AG04449 (cell line): ENCODE measurements at regions of chr1 and their contacts with region 1.

Region 1: DNA sequence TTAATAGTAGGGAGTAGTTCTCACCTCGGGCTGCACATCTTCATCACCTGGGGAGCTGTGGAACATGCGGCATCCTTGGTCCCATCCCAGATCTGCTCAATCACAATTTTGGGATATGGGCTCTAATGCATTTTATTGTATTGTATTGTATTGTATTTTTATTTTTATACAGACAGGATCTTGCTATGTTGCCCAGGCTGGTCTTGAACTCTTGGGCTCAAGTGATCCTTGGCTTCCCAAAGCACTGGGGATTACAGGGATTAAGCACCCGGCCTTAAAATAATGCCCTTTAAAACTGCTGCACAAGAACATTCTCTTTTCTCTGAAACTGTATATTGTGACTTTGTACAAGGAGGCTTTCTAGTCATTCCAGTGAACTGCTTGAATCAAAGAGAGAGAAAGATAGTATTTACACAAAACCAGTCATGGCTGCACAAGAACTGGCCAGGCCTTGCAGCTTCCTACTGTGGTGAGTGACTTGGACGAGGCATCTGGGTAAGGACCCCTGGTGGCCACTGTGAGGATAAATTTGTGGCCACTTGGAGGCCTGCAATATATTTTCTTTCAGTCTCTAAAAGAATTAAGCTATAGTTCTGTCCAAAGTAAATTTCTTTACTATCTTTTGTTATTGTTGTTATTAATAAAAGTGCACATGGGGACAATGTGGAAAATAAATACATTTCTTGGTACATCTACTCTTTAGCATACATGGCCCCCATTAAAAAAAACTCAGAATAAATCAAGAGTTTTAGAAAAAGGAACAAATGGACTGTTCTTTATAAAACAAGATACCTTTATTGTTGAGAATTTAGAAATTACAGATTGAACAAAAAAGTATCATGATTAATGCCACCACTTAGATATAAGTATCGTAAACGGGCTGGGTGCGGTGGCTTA is 48.0 kb downstream of the TBCE start:
- DNase-seq: peak; percentile 33
- H3K4me3 ChIP-seq: no peak overlapping the region
- CTCF ChIP-seq: peak; percentile 78

Region 2: DNA sequence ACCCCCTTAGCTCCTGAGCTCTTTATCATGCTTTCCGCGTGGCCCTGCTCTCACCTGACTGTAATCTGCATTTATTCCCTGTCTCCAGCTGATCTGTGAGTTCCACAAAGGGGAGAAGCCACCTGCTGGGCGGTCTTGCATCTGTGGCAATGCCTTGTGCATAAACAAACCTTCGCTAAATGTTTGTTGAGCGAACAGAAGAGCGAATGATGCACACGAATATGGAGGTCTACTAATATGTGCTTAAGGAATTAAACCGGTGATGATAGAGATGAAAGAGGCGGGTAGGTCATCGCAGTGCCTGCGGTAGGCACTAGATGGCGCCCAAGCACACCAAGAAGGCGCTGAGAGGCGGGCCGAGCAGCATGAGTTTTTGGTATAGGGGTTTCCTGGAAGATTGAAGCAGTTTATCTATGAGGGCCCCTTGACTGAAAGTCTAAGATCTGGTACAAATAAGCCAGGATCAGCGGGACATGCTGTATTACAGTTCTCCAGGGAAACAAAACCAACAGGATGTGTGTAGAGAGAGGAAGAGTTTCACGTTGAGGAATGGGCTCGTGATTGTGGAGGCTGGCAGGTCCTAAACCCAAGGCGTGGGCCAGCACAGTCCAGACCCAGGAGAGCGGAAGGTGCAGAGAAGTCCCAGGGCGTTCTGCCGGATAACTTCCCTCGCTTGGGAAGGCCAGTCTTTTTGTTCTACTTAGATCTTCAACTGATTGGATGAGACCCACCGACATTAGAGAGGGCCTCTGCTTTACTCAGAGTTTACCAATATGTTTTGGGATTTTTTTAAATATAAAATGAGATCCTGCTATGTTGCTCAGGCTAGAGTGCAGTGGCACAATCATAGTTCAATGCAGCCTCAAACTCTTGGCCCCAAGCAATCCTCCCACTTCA is 321.3 kb before region 1 on chr1:
- CTCF ChIA-PET with region 1: interaction called, 11 read pairs
- POLR2A ChIA-PET with region 1: no interaction called
- DNase-seq: no peak
- H3K4me3 ChIP-seq: no peak overlapping the region
- CTCF ChIP-seq: peak; percentile 87

Region 3: GRCh38 chr1:235239851-235240250 is 175.4 kb before region 1 on chr1:
- CTCF ChIA-PET with region 1: interaction called, 39 read pairs
- POLR2A ChIA-PET with region 1: no interaction called
- DNase-seq: no peak
- H3K4me3 ChIP-seq: no peak overlapping the region
- CTCF ChIP-seq: no peak

Region 4: DNA sequence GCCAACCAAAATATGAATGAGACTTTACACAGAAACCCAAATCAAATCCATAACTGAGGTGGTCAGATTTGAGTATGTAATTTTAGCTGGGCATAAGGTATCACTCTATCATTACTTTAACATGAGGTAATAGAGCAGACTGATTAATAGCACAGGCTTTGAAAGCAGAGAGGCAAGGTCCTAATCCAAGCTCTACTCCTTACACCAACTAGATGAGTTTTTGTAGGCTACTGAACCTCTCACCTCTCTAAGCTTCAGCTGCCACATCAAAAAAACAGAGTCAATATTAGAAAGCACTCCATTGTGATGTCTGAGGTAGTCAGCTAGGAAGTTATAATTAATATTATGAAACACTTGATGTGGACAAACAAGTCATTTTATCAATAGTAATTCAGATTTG is 150.9 kb before region 1 on chr1:
- CTCF ChIA-PET with region 1: interaction called, 31 read pairs
- POLR2A ChIA-PET with region 1: no interaction called
- DNase-seq: no peak
- H3K4me3 ChIP-seq: no peak overlapping the region
- CTCF ChIP-seq: no peak

Region 5: DNA sequence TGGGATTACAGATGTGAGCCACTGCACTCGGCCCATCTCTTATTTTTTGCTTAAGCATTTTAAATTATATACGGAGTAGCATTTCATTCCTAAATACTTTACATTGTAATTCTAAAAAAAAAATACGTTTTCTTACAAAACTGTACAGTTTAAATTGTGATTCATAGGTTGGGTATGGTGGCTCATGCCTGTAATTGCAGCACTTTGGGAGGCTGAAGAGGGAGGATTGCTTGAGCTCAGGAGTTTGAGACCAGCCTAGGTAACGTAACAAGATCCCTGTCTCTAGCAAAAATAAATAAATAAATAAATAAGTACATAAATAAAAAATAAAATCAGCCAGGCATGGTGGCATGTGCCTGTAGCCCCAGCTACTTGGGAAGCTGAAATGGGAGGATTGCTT is 23.4 kb before region 1 on chr1:
- CTCF ChIA-PET with region 1: interaction called, 38 read pairs
- POLR2A ChIA-PET with region 1: interaction called, 4 read pairs
- DNase-seq: no peak
- H3K4me3 ChIP-seq: no peak overlapping the region
- CTCF ChIP-seq: no peak

Region 6: DNA sequence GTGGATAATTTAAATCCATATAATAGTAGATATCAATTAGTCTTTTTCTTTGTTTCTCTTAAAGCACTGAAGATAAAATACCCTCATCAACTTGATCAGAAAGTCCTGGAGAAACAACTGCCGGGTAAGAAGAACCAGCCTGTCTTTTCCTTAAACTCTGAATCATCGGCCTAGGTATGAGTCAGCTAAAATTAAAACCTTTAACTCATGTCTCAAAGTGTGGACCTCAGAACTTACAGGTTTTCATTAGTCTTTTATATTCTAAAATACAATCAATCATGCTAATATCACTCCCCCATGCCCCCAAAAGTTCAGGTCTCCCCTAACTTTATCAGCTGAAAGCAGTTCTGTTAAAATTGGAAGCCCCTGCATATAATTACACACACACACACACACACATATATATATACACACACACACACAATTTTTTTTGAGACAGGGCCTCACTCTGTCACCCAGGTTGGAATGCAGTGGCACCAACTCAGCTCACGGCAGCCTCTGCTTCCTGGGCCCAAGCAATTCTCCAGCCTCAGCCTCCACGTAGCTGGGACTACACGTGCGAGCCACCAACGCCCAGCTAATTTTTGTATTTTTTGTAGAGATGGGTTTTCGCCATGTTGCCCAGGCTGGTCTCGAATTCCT is 27.7 kb after region 1 on chr1:
- CTCF ChIA-PET with region 1: interaction called, 30 read pairs
- POLR2A ChIA-PET with region 1: no interaction called
- DNase-seq: peak; percentile 28
- H3K4me3 ChIP-seq: no peak overlapping the region
- CTCF ChIP-seq: no peak

Region 7: DNA sequence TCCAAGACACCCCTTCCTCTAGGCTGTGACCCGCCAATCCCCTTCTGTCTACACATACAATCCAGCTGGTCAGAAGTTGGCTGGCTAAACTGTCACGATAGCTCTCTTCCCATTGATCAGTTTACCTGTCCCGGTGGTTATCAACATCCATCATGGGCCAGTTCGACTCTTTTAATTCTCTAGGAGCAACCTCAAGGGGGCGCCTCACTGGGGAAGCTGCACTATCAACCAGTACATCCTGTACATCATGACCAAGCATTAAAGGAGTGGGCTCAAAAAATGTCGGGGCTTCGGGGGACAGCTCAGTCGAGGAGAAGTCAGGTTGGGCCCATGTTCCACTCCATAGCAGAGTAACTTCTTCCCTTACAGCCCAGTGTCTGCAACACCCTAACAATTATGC is 142.2 kb after region 1 on chr1:
- CTCF ChIA-PET with region 1: no interaction called
- POLR2A ChIA-PET with region 1: no interaction called
- DNase-seq: no peak
- H3K4me3 ChIP-seq: no peak overlapping the region
- CTCF ChIP-seq: no peak

Region 8: DNA sequence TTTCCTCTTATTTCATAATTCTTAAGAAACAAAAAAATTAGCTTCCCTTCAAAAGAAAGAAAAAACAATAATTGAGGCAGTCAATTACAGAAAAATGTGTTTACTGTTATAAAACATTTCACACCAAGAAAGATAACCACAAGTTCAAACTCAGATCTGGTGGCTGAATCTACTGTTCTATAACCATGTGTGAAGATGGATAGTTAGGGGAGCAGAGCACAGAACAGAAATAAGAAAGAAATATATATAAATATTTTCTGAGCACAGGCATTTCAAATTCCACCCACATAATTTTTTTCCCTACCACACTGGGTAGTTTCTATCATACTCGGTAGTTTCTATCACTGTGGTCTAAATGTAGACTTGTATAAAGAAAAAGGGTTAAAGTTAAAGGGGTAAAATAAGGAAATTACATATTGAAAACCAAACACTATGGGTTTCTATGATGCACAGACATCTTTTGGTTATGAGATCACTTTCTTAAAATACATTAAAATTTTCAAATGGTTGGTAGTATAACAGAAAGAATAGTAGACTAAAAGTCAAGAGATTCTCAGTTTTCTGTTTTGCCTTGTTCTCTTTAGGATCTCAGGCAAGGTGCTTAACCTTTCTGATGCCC is 440.7 kb after region 1 on chr1:
- CTCF ChIA-PET with region 1: no interaction called
- POLR2A ChIA-PET with region 1: no interaction called
- DNase-seq: no peak
- H3K4me3 ChIP-seq: no peak overlapping the region
- CTCF ChIP-seq: no peak